GM23248 (cell line): ENCODE measurements at regions of chr1 and their contacts with region 1.

Region 1: GRCh38 chr1:65687428-65688214 is 105.1 kb upstream of the PDE4B start:
- DNase-seq: peak; percentile 77
- H3K4me3 ChIP-seq: no peak overlapping the region
- H3K27ac ChIP-seq: no peak overlapping the region
- H3K4me1 ChIP-seq: peaks cover 8% of the 10 kb centered on the region; the same call in 1 of the 2 replicates
- H3K27me3 ChIP-seq: no peaks in the 10 kb centered on the region

Region 2: DNA sequence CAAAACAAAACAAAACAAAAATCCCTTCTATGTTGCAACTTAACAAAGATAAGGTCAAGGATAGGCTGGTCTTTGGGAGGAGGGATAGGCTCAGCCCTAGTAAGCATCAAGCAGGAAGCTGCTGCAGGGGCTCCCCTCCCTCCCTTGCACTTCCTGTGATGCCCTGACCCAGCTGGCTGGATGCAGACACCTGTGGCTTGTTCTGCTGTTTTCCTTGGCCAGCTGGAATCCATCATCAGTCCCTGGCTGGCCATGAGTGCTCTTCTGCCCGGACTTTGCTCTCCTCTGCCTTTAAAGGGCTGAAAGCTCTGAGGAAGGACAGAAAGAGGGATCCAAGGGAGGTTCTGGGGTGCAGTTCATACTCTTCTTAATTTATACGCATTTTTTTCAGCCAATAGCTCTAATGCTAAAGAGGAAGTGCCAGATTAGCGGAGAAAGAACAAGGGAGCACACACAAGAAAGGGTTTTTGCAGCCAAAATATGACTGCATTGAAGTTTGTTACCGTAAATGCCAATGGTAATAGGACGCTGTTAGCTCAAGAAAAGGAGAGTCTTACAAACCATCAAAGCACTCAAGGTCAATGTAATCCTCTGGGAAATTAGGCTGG is 1504.1 kb before region 1 on chr1:
- in situ Hi-C with region 1: no loop called
- DNase-seq: no peak
- H3K4me3 ChIP-seq: 0 out of 2 replicates have a peak overlapping the region, but pooled peaks have one; percentile 1
- H3K27ac ChIP-seq: peak overlapping the region; percentile 41
- H3K4me1 ChIP-seq: peaks cover 14% of the 10 kb centered on the region
- H3K27me3 ChIP-seq: no peaks in the 10 kb centered on the region

Region 3: GRCh38 chr1:65059930-65060538 is 627.6 kb before region 1 on chr1:
- in situ Hi-C with region 1: loop called (anchors 10 kb)
- DNase-seq: peak; percentile 77
- H3K4me3 ChIP-seq: peak overlapping the region; percentile 31
- H3K27ac ChIP-seq: peak overlapping the region; percentile 20
- H3K4me1 ChIP-seq: peaks cover 11% of the 10 kb centered on the region
- H3K27me3 ChIP-seq: no peaks in the 10 kb centered on the region

Region 4: GRCh38 chr1:65235867-65236805 is 451.5 kb before region 1 on chr1:
- in situ Hi-C with region 1: loop called (anchors 10 kb)
- DNase-seq: peak; percentile 49
- H3K4me3 ChIP-seq: no peak overlapping the region
- H3K27ac ChIP-seq: no peak overlapping the region
- H3K4me1 ChIP-seq: no peaks in the 10 kb centered on the region
- H3K27me3 ChIP-seq: no peaks in the 10 kb centered on the region